ENCODE measurements at regions of chr2 and their contacts with region 1.

Region 1: GRCh38 chr2:177724398-177725287 is 332.1 kb downstream of the AGPS start:
- DNase-seq: peak; percentile 84
- H3K4me3 Mint-ChIP-seq: no peak overlapping the region
- H3K27ac Mint-ChIP-seq: no peak overlapping the region
- H3K4me1 Mint-ChIP-seq: peaks cover 2% of the 10 kb centered on the region
- H3K27me3 Mint-ChIP-seq: peaks cover 33% of the 10 kb centered on the region

Region 2: GRCh38 chr2:177419274-177419673 is 305.4 kb before region 1 on chr2:
- intact Hi-C with region 1: loop called (anchors 5 kb)
- DNase-seq: no peak
- H3K4me3 Mint-ChIP-seq: no peak overlapping the region
- H3K27ac Mint-ChIP-seq: no peak overlapping the region
- H3K4me1 Mint-ChIP-seq: peaks cover 14% of the 10 kb centered on the region
- H3K27me3 Mint-ChIP-seq: no peaks in the 10 kb centered on the region

Region 3: GRCh38 chr2:177501186-177501585 is 223.5 kb before region 1 on chr2:
- intact Hi-C with region 1: loop called (anchors 10 kb)
- DNase-seq: no peak
- H3K4me3 Mint-ChIP-seq: no peak overlapping the region
- H3K27ac Mint-ChIP-seq: no peak overlapping the region
- H3K4me1 Mint-ChIP-seq: peaks cover 10% of the 10 kb centered on the region
- H3K27me3 Mint-ChIP-seq: no peaks in the 10 kb centered on the region